ENCODE measurements at regions of chr19 and their contacts with region 1.

Region 1: DNA sequence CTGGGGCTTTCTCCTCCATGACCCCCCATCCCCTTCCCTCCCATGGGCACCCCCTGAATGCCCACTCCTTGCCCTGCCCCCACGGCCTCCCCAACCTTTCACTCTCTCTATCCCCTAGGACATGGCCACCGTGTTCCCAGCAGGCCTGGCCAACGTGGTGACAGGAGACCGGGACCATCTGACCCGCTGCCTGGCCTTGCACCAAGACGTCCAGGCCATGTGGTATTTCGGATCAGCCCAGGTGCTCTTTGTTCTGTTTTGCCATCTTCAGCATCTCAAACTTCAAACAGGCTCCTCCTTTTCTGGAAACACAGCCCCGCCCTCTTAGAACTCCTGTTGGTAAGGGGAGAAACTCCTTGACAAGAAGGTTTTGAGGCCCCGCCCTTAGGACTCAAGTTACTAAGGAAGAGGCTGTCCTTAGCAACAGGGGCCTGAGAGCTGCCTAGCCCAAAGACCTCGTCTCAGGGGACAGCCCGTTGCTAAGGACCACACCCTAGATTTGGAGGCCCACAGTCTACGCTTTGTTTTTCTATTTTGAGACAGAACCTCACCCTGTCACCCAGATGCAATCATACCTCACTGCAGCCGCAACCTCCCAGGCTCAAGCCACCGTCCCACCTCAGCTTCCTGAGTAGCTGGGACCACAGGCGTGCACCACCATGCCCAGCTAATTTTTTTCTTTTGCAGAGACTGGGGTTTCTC is 5.1 kb upstream of the FLT3LG start:
- DNase-seq: peak; percentile 72
- ATAC-seq: peak; percentile 76
- H3K4me3 Mint-ChIP-seq: peak overlapping the region; percentile 61
- H3K27ac Mint-ChIP-seq: peak overlapping the region; percentile 97
- H3K4me1 Mint-ChIP-seq: peaks cover 46% of the 10 kb centered on the region
- H3K27me3 Mint-ChIP-seq: no peaks in the 10 kb centered on the region
- CTCF ChIP-seq: no peak

Region 2: DNA sequence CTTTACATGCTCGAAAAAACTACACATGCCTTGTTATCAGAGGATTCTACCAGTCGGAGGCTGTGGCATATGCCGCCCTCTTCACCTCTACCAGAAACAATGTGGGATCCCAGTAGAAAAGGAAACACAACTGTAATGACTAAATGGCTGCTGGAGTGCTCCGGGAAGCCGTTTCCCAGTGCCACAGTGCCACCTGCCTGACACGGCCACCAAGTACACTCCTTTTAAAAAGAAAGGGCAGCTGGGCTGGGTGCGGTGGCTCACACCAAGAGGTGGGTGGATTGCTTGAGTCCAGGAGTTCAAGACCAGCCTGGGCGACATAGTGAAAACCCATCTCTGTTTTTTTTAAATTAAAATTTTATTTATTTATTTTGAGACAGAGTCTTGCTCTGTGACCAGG is 244.0 kb before region 1 on chr19:
- CTCF ChIA-PET with region 1: interaction called, 11 read pairs
- POLR2A ChIA-PET with region 1: interaction called, 6 read pairs
- intact Hi-C with region 1: loop called (anchors 1 kb)
- DNase-seq: no peak
- ATAC-seq: peak; percentile 54
- H3K4me3 Mint-ChIP-seq: no peak overlapping the region
- H3K27ac Mint-ChIP-seq: no peak overlapping the region
- H3K4me1 Mint-ChIP-seq: peaks cover 6% of the 10 kb centered on the region
- H3K27me3 Mint-ChIP-seq: peaks cover 6% of the 10 kb centered on the region
- CTCF ChIP-seq: no peak

Region 3: DNA sequence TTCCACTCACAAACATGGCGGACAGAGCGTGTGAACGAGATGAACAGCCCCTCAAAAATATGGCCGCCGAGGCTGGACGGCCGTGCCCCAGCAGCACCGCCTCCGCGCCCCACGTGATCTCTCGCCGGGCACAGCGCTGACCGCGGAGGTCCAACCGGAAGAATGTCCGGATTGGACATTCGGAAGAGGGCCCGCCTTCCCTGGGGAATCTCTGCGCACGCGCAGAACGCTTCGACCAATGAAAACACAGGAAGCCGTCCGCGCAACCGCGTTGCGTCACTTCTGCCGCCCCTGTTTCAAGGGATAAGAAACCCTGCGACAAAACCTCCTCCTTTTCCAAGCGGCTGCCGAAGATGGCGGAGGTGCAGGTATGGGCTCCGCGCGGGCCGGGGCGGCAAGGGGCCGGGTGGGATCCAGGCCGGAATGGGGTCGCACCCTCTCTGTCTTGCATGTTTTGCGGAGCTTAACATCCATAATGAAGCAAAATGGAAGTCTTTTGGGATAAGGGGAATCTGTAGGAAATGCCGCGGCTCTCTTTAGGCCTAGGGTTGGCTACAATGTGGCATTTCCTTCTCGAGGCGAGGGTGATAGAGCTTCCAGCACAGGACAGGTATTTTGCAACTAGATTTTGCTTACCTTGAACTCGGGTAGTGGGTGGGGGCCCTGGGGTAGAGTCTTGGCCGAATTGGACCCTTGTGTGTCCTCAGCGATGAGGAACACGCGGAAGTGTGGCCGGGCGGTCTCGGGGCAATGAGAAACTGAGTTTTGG is 18.6 kb after region 1 on chr19 and contains the start of gene RPL13A:
- CTCF ChIA-PET with region 1: interaction called, 3 read pairs
- POLR2A ChIA-PET with region 1: interaction called, 14 read pairs
- intact Hi-C with region 1: loop called (anchors 1 kb)
- DNase-seq: peak; percentile 100
- ATAC-seq: peak; percentile 91
- H3K4me3 Mint-ChIP-seq: peak within 1 kb of the TSS; percentile 93
- H3K27ac Mint-ChIP-seq: peak within 1 kb of the TSS; percentile 91
- H3K4me1 Mint-ChIP-seq: peaks cover 37% of the 10 kb centered on the region
- H3K27me3 Mint-ChIP-seq: peaks cover 2% of the 10 kb centered on the region
- CTCF ChIP-seq: no peak
- total RNA-seq, gene RPL13A: 6,642 and 7,342 TPM in 2 replicates

Measured in activated B cell treated with CpG ODN at 0.5 μM for 24 hours (primary cell).